ENCODE measurements at regions of chr2 and their contacts with region 1.

Region 1: GRCh38 chr2:26745609-26746327 is 18.3 kb upstream of the SLC35F6 start:
- DNase-seq: peak; percentile 77 to 90 (median 89)
- H3K4me3 ChIP-seq: no peak overlapping the region
- H3K27ac ChIP-seq: no peak overlapping the region
- H3K4me1 ChIP-seq: no peaks in the 10 kb centered on the region
- H3K27me3 ChIP-seq: no peaks in the 10 kb centered on the region
- CTCF ChIP-seq: peak; percentile 85 to 95 (median 85)
- EP300 ChIP-seq: no peak
- POLR2A ChIP-seq: peak; percentile 31

Region 2: DNA sequence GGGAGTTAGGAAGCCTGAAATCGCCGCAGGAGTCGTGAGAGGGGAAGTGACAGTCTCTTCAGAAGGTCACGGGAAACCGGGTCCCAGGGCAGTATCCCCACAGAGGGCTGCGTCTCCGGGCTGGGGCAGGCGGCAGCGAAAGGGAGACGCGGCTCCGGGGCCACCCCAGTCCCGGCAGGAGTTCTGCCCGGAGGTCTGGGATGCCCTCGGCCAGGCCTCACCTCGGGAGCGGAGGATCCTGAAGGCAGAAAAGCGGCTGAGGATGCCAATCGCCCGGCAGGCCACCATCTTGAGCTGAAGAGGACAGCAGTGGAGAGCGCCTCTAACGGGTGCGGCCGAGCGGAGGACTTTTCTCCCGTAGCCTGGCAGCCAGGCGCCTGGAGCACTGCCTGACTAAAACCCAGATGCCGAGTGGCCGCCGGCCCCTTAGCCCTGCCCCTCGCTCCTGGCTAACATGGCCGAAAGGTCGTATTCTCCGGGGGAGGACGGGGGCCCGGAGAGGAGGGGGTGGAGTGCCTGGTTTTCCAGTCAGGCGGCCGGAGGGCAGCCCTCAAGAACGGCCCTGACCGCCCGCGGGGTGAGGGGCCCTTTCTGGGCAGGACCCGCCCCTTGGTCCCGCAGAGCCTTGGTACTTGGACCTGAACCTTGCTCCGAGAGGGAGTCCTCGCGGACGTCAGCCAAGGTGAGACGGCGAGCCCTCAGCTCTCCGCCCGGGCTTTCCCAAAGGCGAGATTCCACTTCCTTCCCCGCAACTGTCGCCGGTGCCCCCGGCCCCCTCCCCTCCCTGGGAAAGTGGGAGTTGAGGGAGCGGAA is 501.3 kb before region 1 on chr2 and contains the starts of genes HADHA and HADHB:
- intact Hi-C with region 1: no loop called
- DNase-seq: peak; percentile 89 to 92 (median 90)
- H3K4me3 ChIP-seq: peak within 1 kb of the TSS; percentile 95
- H3K27ac ChIP-seq: peak within 1 kb of the TSS; percentile 72 to 97
- H3K4me1 ChIP-seq: peaks cover 15% of the 10 kb centered on the region
- H3K27me3 ChIP-seq: no peaks in the 10 kb centered on the region
- CTCF ChIP-seq: peak in 1 of 3 donors; percentile 27
- EP300 ChIP-seq: no peak
- POLR2A ChIP-seq: peak; percentile 69
- total RNA-seq, gene HADHA: 85.2 to 167 (median 129) TPM
- total RNA-seq, gene HADHB: 81.1 to 124 (median 104) TPM

Region 3: DNA sequence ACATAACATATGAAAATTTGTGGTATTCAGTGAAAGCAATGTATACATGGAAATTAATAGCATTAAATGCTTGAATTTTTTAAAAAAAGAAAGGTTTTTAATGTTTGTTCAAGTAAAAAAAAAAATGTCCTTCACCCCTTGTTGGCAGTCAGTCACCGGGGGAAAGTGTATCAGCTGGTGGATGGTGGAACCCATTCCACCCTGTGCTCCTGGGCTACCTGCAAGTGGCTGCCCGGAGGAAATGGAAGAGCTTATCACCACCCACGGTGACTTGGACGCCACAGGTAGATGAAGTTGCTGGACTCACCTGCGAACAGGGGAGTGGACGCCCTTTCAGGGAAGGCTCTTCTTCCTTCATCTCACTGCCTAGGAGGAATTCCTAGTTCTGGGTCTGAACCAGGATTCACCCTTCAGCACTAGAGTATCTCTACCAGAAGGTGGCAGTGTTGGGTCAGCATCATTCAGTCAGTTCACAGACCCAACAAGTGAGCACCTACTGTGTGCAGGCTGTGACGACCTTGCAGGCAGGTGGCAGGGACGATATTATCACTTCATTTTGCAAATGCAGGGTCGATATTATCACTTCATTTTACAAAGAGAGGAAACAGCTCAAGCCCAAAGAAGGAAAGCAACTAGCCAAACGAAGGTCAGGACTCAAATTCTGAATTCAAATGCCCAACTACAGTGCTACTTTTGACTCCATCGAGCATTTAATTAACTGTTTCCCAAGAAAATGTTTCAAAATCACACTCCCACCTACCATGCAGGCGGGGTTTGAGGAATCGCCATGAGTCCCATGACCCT is 140.4 kb before region 1 on chr2:
- intact Hi-C with region 1: loop called (anchors 1 to 5 kb)
- DNase-seq: peak in 4 of 5 donors; percentile 21 to 49 (median 38)
- H3K4me3 ChIP-seq: no peak overlapping the region
- H3K27ac ChIP-seq: no peak overlapping the region
- H3K4me1 ChIP-seq: no peaks in the 10 kb centered on the region
- H3K27me3 ChIP-seq: no peaks in the 10 kb centered on the region
- CTCF ChIP-seq: peak; percentile 31 to 93 (median 91)
- EP300 ChIP-seq: no peak
- POLR2A ChIP-seq: no peak

Region 4: GRCh38 chr2:26864226-26864625 is 118.5 kb after region 1 on chr2:
- intact Hi-C with region 1: no loop called
- DNase-seq: no peak
- H3K4me3 ChIP-seq: no peak overlapping the region
- H3K27ac ChIP-seq: no peak overlapping the region
- H3K4me1 ChIP-seq: no peaks in the 10 kb centered on the region
- H3K27me3 ChIP-seq: no peaks in the 10 kb centered on the region
- CTCF ChIP-seq: no peak
- EP300 ChIP-seq: no peak
- POLR2A ChIP-seq: no peak

Region 5: DNA sequence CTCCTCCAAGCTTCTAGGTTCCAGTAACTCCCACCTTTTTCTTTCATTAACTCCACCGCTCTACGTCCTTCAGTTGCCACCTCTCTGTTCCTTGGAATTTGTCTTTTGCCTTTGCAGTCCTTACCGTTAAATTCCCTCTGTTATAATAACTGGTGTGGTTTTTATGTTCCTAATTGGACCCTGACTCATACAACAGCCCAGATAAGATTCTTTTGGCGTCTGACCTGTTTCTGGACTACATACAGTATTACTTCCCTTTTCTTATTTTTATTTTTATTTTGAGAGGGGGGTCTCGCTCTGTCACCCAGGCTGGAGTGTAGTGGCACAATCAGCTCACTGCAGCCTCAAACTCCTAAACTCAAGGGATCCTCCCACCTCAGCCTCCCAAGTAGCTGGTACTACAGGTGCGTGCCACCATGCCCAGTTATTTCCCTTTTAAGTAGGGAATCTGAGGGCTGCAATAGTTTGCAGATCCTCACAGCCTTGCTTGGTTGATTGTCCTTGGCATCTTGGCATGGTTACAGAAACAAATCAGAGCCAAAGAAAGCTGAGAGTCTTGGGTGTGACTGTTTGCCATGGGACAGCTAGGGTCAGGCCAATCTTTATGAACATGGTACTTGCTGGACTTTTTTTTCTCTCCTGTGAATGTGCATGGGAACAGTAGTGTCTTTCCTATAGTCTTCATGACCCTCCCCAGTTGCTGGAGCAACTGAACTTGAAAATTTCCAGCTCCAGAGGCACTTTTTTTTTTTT is 425.0 kb after region 1 on chr2:
- intact Hi-C with region 1: no loop called
- DNase-seq: no peak
- H3K4me3 ChIP-seq: no peak overlapping the region
- H3K27ac ChIP-seq: no peak overlapping the region
- H3K4me1 ChIP-seq: peaks cover 2% of the 10 kb centered on the region
- H3K27me3 ChIP-seq: no peaks in the 10 kb centered on the region
- CTCF ChIP-seq: no peak
- EP300 ChIP-seq: no peak
- POLR2A ChIP-seq: no peak

Measured in ovary (tissue), 10 donors.